ENCODE measurements at regions of chr10 and their contacts with region 1.

Region 1: GRCh38 chr10:1056326-1057105 is at the start of gene WDR37:
- DNase-seq: peak; percentile 87
- H3K4me3 ChIP-seq: peak within 1 kb of the TSS; percentile 80
- H3K27ac ChIP-seq: peak within 1 kb of the TSS; percentile 89
- H3K4me1 ChIP-seq: peaks cover 48% of the 10 kb centered on the region
- CTCF ChIP-seq: no peak
- total RNA-seq, gene WDR37: 8.5 and 9.7 TPM in 2 replicates

Region 2: DNA sequence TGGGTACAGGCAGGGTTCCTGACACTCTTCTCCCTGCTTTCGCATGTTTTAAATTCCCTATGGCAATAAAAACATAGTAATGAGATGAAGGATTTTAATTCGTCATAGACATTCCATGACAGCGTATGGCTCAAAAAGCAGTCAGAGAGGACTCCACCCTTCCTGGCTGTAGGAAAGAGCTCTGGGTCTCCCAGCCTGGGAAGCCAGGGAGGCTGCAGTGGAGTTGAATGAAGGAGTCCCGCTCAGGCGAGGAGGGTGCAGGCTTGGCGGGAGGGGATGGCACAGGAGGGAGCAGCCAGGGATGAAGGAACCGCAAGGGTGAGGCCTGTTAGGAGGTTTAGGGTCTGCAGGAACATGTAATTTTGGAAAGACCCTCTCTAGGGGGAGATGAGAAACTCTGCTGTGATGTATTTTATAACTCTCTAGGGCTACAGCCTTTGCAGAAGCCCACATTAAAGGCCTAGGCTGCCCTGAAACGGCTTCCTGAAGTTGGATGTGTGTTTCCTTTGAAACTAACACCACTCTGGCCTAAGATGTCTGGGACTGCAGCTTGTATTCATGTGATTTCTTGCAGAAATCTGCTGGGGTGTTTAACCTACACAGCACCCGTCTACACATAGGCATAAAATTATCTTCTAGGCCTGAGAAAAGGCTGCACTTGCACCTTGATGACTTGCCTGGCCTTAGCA is 117.4 kb before region 1 on chr10:
- CTCF ChIA-PET with region 1: no interaction called
- POLR2A ChIA-PET with region 1: no interaction called
- intact Hi-C with region 1: no loop called
- DNase-seq: no peak
- H3K4me3 ChIP-seq: no peak overlapping the region
- H3K27ac ChIP-seq: no peak overlapping the region
- H3K4me1 ChIP-seq: peaks cover 8% of the 10 kb centered on the region
- CTCF ChIP-seq: no peak

Region 3: DNA sequence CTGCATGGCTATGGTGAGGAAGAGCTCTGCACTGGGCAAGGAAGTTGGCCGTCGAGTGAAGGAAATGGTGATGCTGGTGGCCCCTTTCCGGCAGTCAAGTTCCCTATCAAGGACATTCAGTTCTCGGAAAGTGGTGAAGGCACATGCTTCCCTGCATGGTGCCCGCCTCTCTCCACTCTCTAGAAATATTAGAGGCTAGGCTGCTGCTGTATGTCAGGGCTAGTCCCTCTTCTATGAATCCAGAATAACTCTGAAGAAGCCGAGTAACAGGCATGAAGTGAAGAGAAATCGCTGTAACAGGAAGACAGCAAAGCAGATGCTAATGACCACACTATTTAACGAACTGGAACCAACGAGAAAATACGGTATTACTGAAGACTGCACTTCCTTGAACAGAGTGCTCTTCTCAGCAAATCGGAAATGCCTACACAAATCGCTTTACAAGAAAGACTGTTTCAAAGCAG is 13.0 kb before region 1 on chr10:
- CTCF ChIA-PET with region 1: no interaction called
- POLR2A ChIA-PET with region 1: interaction called, 12 read pairs
- intact Hi-C with region 1: no loop called
- DNase-seq: peak; percentile 80
- H3K4me3 ChIP-seq: peak overlapping the region; percentile 61
- H3K27ac ChIP-seq: peak overlapping the region; percentile 82
- H3K4me1 ChIP-seq: peaks cover 42% of the 10 kb centered on the region
- CTCF ChIP-seq: no peak

Region 4: DNA sequence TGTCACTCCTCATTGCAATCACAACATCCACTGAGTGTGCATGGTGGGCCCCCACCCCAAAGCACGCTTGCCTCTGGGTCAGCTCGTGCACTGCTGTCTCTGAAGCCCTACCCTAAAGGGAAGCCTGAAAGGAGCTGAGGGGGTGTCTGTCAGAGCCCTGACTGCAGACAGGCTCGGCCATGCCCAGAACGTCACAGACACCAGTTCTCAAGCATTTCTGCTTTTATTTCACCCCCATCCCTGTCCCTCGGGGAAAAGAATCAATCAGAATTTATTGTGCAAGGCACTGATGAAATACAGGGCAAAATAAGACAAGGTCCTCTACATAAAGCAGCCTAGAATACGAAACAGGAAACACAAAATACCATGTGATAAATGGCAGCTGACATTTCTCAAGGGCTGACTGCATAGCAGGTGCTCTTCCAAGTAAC is 231.5 kb after region 1 on chr10:
- CTCF ChIA-PET with region 1: no interaction called
- POLR2A ChIA-PET with region 1: no interaction called
- intact Hi-C with region 1: no loop called
- DNase-seq: no peak
- H3K4me3 ChIP-seq: no peak overlapping the region
- H3K27ac ChIP-seq: no peak overlapping the region
- H3K4me1 ChIP-seq: no peaks in the 10 kb centered on the region
- CTCF ChIP-seq: no peak

Measured in OCI-LY7 (cell line).